CD14-positive monocyte (primary cell): ENCODE measurements at regions of chr17 and their contacts with region 1.

Region 1: GRCh38 chr17:42405963-42406495 is 17.0 kb downstream of the CAVIN1 start:
- DNase-seq: peak; percentile 65 to 74 (median 74)
- H3K4me3 ChIP-seq: no peak overlapping the region
- H3K4me3 Mint-ChIP-seq: no peak overlapping the region
- H3K27ac ChIP-seq: no peak overlapping the region
- H3K27ac Mint-ChIP-seq: no peak overlapping the region
- H3K4me1 ChIP-seq: peaks cover 14 to 17% of the 10 kb centered on the region in 2 donors
- H3K4me1 Mint-ChIP-seq: peaks cover 16% of the 10 kb centered on the region
- H3K27me3 ChIP-seq: peaks cover 0 to 7% of the 10 kb centered on the region in 2 donors
- H3K27me3 Mint-ChIP-seq: peaks cover 13 to 16% (median 16%) of the 10 kb centered on the region in 3 donors
- CTCF ChIP-seq: peak; percentile 84

Region 2: DNA sequence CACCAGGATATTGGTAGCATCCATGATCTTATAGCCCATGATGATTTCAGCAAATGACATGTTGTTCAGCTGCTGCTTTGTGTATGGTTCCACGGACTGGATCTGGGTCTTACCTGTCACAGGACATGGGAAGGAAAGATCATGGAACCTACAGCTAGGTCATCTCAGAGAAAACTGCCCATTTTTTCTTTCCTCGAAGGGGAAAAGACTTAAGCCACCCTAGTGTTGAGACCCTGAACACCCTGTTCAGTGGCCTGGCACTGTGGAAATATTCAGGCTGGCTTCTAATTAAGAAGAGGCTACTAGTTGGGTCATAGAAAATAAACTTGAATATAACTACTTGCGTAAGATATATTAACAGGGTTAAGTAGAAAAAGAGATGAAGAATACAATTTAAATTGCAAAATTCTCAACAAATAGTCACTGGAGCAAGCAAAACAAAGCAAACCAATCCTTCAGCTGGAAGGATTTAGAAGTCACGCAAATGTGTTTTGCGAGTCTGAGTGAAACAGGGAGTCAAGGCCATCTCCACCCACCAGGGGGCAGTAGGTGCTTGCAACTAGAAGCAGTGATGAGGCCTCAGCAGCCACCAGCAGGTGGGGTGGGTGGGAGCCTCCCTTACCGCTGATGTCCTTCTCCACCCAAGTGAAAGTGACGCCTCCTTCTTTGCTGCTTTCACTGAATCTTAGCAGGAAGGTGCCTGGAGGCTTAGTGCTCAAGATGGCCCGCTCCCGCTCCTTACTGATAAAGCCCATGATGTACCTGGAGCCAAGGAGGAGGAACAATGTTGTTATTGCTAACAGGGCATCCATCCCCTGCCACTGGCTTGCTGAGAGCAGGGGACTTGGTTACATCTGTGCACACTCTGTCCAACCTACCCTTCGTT is 83.4 kb before region 1 on chr17:
- intact Hi-C with region 1: loop called (anchors 1 to 2 kb)
- DNase-seq: peak; percentile 85 to 89 (median 89)
- H3K4me3 ChIP-seq: no peak overlapping the region
- H3K4me3 Mint-ChIP-seq: no peak overlapping the region
- H3K27ac ChIP-seq: no peak overlapping the region
- H3K27ac Mint-ChIP-seq: peak overlapping the region in 5 of 7 donors; percentile 28 to 61 (median 41)
- H3K4me1 ChIP-seq: peaks cover 3 to 6% of the 10 kb centered on the region in 2 donors
- H3K4me1 Mint-ChIP-seq: peaks cover 17% of the 10 kb centered on the region
- H3K27me3 ChIP-seq: no peaks in the 10 kb centered on the region
- H3K27me3 Mint-ChIP-seq: peaks cover 0 to 2% (median 0%) of the 10 kb centered on the region in 3 donors
- CTCF ChIP-seq: peak; percentile 100

Region 3: DNA sequence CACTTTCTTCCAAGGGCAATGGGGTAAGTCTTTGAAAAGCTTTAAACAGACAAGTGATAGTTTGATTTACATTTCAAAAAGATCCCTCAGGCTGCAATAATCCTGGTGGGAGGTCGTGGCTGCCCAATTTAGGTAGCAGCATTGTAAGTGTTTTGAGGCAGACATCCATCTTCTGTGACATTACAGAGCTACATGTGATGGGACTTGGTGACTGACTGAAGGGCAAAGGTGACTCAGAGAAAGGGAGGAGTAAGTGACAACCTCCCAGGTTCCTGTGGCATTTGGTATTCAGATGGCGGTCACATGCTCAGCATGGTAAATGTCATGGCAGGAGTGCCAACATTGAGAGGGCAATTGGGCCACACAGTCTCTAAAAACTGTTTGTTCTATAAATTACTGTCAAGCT is 44.2 kb before region 1 on chr17:
- intact Hi-C with region 1: loop called in 1 of 2 experiments (anchors 5 kb)
- DNase-seq: peak in 1 of 3 donors; percentile 23
- H3K4me3 ChIP-seq: no peak overlapping the region
- H3K4me3 Mint-ChIP-seq: no peak overlapping the region
- H3K27ac ChIP-seq: no peak overlapping the region
- H3K27ac Mint-ChIP-seq: peak overlapping the region in 4 of 7 donors; percentile 9 to 69 (median 38)
- H3K4me1 ChIP-seq: peaks cover 35 to 41% of the 10 kb centered on the region in 2 donors
- H3K4me1 Mint-ChIP-seq: peaks cover 68% of the 10 kb centered on the region
- H3K27me3 ChIP-seq: no peaks in the 10 kb centered on the region
- H3K27me3 Mint-ChIP-seq: no peaks in the 10 kb centered on the region
- CTCF ChIP-seq: no peak